HEK293T (cell line): ENCODE measurements at regions of chr11 and their contacts with region 1.

Region 1: GRCh38 chr11:7034019-7034418 is 13.7 kb downstream of the NLRP14 start:
- DNase-seq: no peak

Region 2: DNA sequence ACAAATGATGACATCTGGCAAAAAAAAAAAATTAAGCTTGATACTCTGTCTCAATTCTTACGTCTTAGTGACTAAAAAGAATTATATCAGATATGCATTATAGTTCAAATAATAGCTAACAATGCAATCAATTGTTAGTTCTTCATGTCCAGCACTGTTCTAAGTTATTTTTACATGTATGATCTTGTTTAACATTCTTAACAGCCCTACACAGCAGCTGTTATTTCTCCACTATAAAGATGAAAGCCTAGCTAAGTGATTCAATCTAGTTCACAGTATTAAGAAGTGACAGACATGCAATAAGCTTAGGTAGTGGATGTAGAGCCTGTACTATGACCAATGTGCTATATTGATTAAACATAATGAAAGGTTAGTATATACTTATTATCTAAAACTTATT is 18.0 kb before region 1 on chr11:
- CTCF ChIA-PET with region 1: interaction called, 10 read pairs
- POLR2A ChIA-PET with region 1: no interaction called
- DNase-seq: no peak